ENCODE measurements at regions of chr5 and their contacts with region 1.

Region 1: DNA sequence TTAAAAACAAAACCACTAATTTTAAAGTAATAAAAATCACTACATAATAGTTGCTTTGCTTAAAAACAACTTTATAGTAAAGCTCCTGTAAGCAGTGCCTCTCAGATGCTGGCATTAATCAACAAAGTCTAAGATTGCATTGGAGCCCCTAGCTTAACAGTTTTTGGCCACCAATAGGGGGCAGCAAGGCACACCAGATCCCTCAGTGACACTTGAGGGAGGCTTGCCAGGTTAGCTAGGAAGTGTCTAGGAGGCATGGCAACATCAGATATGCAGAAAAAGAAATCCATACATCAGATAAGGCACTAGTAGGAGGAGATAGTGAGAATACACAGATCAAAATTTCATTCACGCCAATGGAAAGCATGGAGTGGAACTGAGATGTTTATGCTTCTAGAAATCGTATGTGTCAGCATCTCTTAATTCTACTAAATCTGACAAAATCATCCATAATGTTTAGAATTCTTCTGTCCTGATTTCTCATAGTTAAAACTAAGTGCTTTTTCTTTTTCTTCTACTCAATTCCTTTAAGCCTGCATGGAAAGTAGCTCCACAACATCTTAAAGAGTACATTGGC is 73.6 kb upstream of the PAM start:
- DNase-seq: peak; percentile 73
- ATAC-seq: peak; percentile 92
- H3K4me3 ChIP-seq: no peak overlapping the region
- H3K27ac ChIP-seq: no peak overlapping the region
- H3K4me1 ChIP-seq: no peaks in the 10 kb centered on the region
- H3K27me3 ChIP-seq: no peaks in the 10 kb centered on the region
- CTCF ChIP-seq: peak; percentile 83
- POLR2A ChIP-seq: no peak
- RAD21 ChIP-seq: peak; percentile 86

Region 2: DNA sequence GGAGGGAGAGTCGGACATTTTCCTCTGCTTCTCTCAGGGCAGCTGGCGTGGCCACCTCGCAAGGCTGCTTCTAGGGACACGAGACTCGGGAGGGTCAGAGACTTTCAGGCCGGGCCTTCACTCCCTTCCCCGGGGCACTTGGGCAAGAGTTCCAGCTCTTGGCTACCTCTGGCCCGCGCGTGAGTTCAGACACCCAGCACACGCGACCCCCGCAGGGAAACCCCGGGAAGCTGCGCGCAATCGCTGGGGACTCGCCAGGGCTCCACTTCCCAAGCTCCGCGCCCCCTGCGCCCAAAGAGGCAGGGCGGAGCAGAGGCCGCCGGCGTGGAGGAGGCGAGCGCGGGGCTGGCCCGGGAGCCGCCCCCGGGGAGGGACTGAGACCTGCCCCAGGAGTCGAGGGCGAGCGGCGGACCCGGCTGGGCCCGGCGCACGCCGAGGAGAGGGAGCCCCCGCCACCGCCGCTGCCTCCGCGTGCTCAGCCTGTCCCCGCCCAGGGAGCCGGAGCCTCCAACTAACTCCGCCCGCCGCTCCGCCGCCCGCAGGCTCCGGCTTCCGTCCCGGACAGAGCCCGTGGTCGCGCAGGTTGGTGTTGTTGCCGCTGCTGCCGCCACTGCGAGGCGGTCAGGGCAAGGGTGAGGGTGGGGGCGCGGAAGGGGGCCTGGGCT is 73.4 kb after region 1 on chr5 and contains the start of gene PAM:
- CTCF ChIA-PET with region 1: interaction called, 9 read pairs
- POLR2A ChIA-PET with region 1: no interaction called
- dilution Hi-C with region 1: no loop called
- in situ Hi-C with region 1: no loop called
- intact Hi-C with region 1: loop called (anchors 1 kb)
- DNase-seq: peak; percentile 62
- ATAC-seq: peak; percentile 89
- H3K4me3 ChIP-seq: peak within 1 kb of the TSS; percentile 59
- H3K27ac ChIP-seq: peak within 1 kb of the TSS; percentile 44
- H3K4me1 ChIP-seq: peaks cover 7% of the 10 kb centered on the region
- H3K27me3 ChIP-seq: no peaks in the 10 kb centered on the region
- CTCF ChIP-seq: no peak
- POLR2A ChIP-seq: peak; percentile 60; the same call in 1 of the 2 replicates
- RAD21 ChIP-seq: no peak
- total RNA-seq, gene PAM: 112 and 115 TPM in 2 replicates

Region 3: DNA sequence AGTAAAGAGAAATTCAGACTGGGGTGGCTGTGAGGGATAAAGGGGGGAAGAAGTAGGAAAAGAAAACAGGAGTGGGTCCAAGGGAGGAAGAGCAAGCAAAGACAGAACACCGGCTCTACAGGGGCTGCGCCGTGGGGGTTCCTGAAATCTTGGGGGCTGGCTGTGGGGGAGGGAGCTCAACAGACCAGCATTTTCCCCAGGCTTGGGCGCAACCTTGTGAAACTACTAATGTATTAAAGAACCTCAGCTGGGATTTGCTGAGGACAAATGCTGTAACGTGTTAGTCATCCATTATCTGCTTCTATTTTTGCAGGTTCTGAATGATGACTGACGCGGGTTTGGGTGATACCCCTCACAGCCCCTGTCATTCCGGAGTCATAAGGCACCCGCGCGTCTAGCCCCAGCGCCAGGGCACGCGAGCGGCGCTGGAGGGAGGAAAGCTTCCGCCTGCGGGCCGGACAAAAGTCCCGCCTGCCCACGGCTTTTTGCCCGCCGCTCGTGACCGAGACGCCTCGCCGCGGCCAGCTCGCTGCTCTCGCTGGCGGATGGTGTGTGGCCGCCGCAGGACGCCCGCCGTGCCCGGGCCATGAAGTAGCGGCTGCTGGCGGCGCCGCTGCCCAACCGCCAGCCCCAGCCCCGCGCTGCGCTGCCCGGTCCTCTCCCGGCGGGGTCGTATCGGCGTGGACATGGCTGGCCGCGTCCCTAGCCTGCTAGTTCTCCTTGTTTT is 184.2 kb after region 1 on chr5:
- CTCF ChIA-PET with region 1: interaction called, 6 read pairs
- POLR2A ChIA-PET with region 1: no interaction called
- dilution Hi-C with region 1: no loop called
- in situ Hi-C with region 1: no loop called
- intact Hi-C with region 1: loop called (anchors 5 kb)
- DNase-seq: peak; percentile 88
- ATAC-seq: peak; percentile 83
- H3K4me3 ChIP-seq: peak overlapping the region; percentile 56
- H3K27ac ChIP-seq: peak overlapping the region; percentile 79
- H3K4me1 ChIP-seq: peaks cover 2% of the 10 kb centered on the region
- H3K27me3 ChIP-seq: no peaks in the 10 kb centered on the region
- CTCF ChIP-seq: no peak
- POLR2A ChIP-seq: peak; percentile 82
- RAD21 ChIP-seq: no peak

Region 4: GRCh38 chr5:103031607-103032006 is 350.1 kb after region 1 on chr5:
- CTCF ChIA-PET with region 1: no interaction called
- POLR2A ChIA-PET with region 1: no interaction called
- dilution Hi-C with region 1: no loop called
- in situ Hi-C with region 1: loop called (anchors 10 kb)
- intact Hi-C with region 1: no loop called
- DNase-seq: no peak
- ATAC-seq: peak; percentile 48
- H3K4me3 ChIP-seq: no peak overlapping the region
- H3K27ac ChIP-seq: no peak overlapping the region
- H3K4me1 ChIP-seq: no peaks in the 10 kb centered on the region
- H3K27me3 ChIP-seq: no peaks in the 10 kb centered on the region
- CTCF ChIP-seq: peak; percentile 41
- POLR2A ChIP-seq: no peak
- RAD21 ChIP-seq: no peak; the same call in 1 of the 2 replicates

Region 5: GRCh38 chr5:103139264-103139865 is 457.9 kb after region 1 on chr5:
- CTCF ChIA-PET with region 1: no interaction called
- POLR2A ChIA-PET with region 1: no interaction called
- dilution Hi-C with region 1: no loop called
- in situ Hi-C with region 1: no loop called
- intact Hi-C with region 1: loop called (anchors 5 kb)
- DNase-seq: peak; percentile 68
- ATAC-seq: peak; percentile 97
- H3K4me3 ChIP-seq: no peak overlapping the region
- H3K27ac ChIP-seq: no peak overlapping the region
- H3K4me1 ChIP-seq: no peaks in the 10 kb centered on the region
- H3K27me3 ChIP-seq: no peaks in the 10 kb centered on the region
- CTCF ChIP-seq: peak; percentile 91
- POLR2A ChIP-seq: no peak
- RAD21 ChIP-seq: peak; percentile 95

Measured in IMR-90 (cell line).